ENCODE measurements at regions of chr12 and their contacts with region 1.

Region 1: DNA sequence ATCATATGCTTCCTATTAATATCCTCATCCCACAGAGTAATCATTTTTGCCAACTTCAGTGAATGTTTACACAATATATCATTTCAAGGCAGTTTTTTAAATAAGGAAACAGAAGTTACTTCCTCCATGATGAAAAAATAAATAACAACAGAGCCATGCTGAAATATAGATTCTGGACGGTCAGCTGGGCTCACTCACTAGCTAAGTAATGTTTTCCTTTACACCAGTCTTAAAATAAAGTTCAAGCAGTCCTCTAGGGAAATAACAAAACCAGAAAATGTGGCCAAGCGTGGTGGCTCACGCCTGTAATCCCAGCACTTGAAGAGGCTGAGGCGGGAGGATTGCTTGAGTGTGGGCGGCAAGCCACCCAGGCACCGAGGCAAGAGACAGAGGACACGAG is 28.7 kb downstream of the AICDA start:
- DNase-seq: peak in 1 of 3 donors; percentile 46
- H3K4me3 ChIP-seq: no peak overlapping the region
- H3K4me3 Mint-ChIP-seq: no peak overlapping the region
- H3K27ac ChIP-seq: peak overlapping the region in 1 of 2 donors; percentile 16
- H3K27ac Mint-ChIP-seq: peak overlapping the region; percentile 34 to 90 (median 83)
- H3K4me1 ChIP-seq: peaks cover 9 to 13% of the 10 kb centered on the region in 2 donors
- H3K4me1 Mint-ChIP-seq: peaks cover 18% of the 10 kb centered on the region
- H3K27me3 ChIP-seq: no peaks in the 10 kb centered on the region
- H3K27me3 Mint-ChIP-seq: peaks cover 0 to 2% (median 0%) of the 10 kb centered on the region in 3 donors
- CTCF ChIP-seq: no peak

Region 2: GRCh38 chr12:8549381-8549780 is 34.6 kb before region 1 on chr12:
- intact Hi-C with region 1: loop called in 1 of 2 experiments (anchors 5 kb)
- DNase-seq: no peak
- H3K4me3 ChIP-seq: no peak overlapping the region
- H3K4me3 Mint-ChIP-seq: no peak overlapping the region
- H3K27ac ChIP-seq: no peak overlapping the region
- H3K27ac Mint-ChIP-seq: no peak overlapping the region
- H3K4me1 ChIP-seq: peaks cover 7 to 14% of the 10 kb centered on the region in 2 donors
- H3K4me1 Mint-ChIP-seq: peaks cover 18% of the 10 kb centered on the region
- H3K27me3 ChIP-seq: no peaks in the 10 kb centered on the region
- H3K27me3 Mint-ChIP-seq: peaks cover 2 to 6% (median 3%) of the 10 kb centered on the region in 3 donors
- CTCF ChIP-seq: no peak

Region 3: GRCh38 chr12:8572507-8572906 is 11.5 kb before region 1 on chr12:
- intact Hi-C with region 1: loop called in 1 of 2 experiments (anchors 1 kb)
- DNase-seq: peak; percentile 79 to 89 (median 89)
- H3K4me3 ChIP-seq: peak overlapping the region in 1 of 3 experiments; percentile 40
- H3K4me3 Mint-ChIP-seq: peak overlapping the region in 1 of 2 donors; percentile 78
- H3K27ac ChIP-seq: peak overlapping the region; percentile 66 to 92
- H3K27ac Mint-ChIP-seq: peak overlapping the region; percentile 80 to 99 (median 98)
- H3K4me1 ChIP-seq: peaks cover 33 to 50% of the 10 kb centered on the region in 2 donors
- H3K4me1 Mint-ChIP-seq: peaks cover 27% of the 10 kb centered on the region
- H3K27me3 ChIP-seq: no peaks in the 10 kb centered on the region
- H3K27me3 Mint-ChIP-seq: peaks cover 0 to 3% (median 2%) of the 10 kb centered on the region in 3 donors
- CTCF ChIP-seq: no peak

Measured in CD14-positive monocyte (primary cell).